ENCODE measurements at regions of chr21 and their contacts with region 1.

Region 1: DNA sequence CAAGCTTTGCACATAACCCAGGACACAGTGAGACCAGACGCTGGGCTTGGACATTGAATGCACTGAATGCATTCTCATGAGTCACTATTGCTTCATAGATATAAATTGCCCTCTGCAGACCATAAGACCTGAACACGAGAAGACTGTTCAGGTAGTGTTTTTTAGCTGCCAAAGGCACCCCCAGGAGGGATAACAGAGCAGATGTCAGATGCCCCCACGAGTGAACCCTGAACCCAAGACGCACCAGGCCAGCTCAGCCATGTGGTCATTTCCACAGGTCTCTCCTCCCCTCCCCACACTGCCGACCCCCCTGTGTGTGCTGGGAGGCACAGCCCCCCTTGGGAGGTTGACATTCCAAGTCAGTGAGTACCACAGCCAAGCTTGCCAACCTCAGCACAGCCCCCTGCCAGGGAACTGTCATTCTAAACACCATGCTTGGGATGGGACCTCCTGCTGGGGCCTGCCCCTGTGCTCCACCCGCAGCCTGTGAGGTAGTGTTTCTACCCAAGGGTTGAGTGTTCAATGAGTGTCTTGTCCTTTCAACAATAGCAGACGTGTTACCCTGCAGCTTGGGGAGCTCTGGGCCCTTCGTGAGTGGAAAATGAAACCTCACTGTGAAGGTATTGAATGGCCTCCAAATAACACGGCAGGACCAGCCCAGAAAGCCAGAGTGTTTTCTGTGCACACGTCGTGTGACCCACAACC is 68.2 kb downstream of the PSMG1 start:
- DNase-seq: no peak

Region 2: GRCh38 chr21:37551331-37551992 is 1563.6 kb before region 1 on chr21:
- intact Hi-C with region 1: loop called in 1 of 2 experiments (anchors 5 kb)
- DNase-seq: peak; percentile 15

Region 3: GRCh38 chr21:39088831-39089380 is 26.1 kb before region 1 on chr21:
- intact Hi-C with region 1: no loop called
- DNase-seq: no peak

Region 4: GRCh38 chr21:39144191-39144590 is 29.2 kb after region 1 on chr21:
- intact Hi-C with region 1: no loop called
- DNase-seq: no peak